Ovary (tissue), 10 donors: ENCODE measurements at regions of chr10 and their contacts with region 1.

Region 1: GRCh38 chr10:71893920-71894319 is 42.9 kb upstream of the PSAP start:
- DNase-seq: peak in 1 of 5 donors; percentile 20
- H3K4me3 ChIP-seq: no peak overlapping the region
- H3K27ac ChIP-seq: no peak overlapping the region
- H3K4me1 ChIP-seq: peaks cover 7% of the 10 kb centered on the region
- H3K27me3 ChIP-seq: no peaks in the 10 kb centered on the region
- CTCF ChIP-seq: no peak
- EP300 ChIP-seq: no peak
- POLR2A ChIP-seq: no peak

Region 2: GRCh38 chr10:70866424-70866823 is 1027.5 kb before region 1 on chr10:
- intact Hi-C with region 1: no loop called
- DNase-seq: no peak
- H3K4me3 ChIP-seq: no peak overlapping the region
- H3K27ac ChIP-seq: no peak overlapping the region
- H3K4me1 ChIP-seq: no peaks in the 10 kb centered on the region
- H3K27me3 ChIP-seq: no peaks in the 10 kb centered on the region
- CTCF ChIP-seq: no peak
- EP300 ChIP-seq: no peak
- POLR2A ChIP-seq: no peak

Region 3: DNA sequence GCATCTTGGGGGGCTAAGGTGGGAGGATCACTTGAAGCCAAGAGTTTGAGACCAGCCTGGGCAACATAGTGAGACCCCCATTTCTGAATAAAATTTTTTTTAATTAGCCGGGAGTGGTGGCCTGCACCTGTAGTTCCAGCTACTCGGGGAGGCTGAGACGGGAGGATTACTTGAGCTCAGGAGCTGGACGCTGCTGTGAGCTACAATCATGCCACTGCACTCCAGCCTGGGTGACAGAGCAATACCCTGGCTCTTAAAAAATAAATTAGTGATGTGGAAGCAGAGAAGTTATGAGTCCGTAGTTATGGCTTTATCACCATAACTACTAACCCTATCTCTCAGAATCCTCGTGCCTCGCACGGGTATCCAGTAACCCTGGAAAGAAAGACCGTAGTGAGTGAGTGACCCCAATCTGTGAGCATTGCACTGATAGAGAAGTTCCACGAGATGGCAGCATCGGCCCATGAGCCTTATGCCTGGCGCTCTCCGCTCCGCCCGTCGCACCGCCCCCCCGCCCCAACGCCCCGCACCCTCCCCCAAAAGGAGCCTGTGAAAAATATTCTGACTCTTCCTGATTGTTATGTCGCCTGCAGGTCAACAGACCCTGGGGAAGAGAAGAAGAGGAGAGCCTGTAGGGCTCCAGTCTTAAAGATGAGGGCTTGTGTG is 579.8 kb before region 1 on chr10:
- intact Hi-C with region 1: loop called in 2 of 4 experiments (anchors 5 to 10 kb)
- DNase-seq: peak; percentile 64 to 77 (median 77)
- H3K4me3 ChIP-seq: no peak overlapping the region
- H3K27ac ChIP-seq: peak overlapping the region; percentile 41 to 79
- H3K4me1 ChIP-seq: peaks cover 15% of the 10 kb centered on the region
- H3K27me3 ChIP-seq: no peaks in the 10 kb centered on the region
- CTCF ChIP-seq: peak; percentile 48 to 85 (median 70)
- EP300 ChIP-seq: no peak
- POLR2A ChIP-seq: no peak

Region 4: GRCh38 chr10:71390461-71390835 is 503.5 kb before region 1 on chr10:
- intact Hi-C with region 1: loop called in 1 of 4 experiments (anchors 5 kb)
- DNase-seq: peak in 1 of 5 donors; percentile 11
- H3K4me3 ChIP-seq: no peak overlapping the region
- H3K27ac ChIP-seq: no peak overlapping the region
- H3K4me1 ChIP-seq: no peaks in the 10 kb centered on the region
- H3K27me3 ChIP-seq: no peaks in the 10 kb centered on the region
- CTCF ChIP-seq: no peak
- EP300 ChIP-seq: no peak
- POLR2A ChIP-seq: no peak

Region 5: GRCh38 chr10:71623098-71623985 is 270.6 kb before region 1 on chr10:
- intact Hi-C with region 1: no loop called
- DNase-seq: peak in 1 of 5 donors; percentile 56
- H3K4me3 ChIP-seq: no peak overlapping the region
- H3K27ac ChIP-seq: peak overlapping the region in 1 of 2 donors; percentile 67
- H3K4me1 ChIP-seq: peaks cover 21% of the 10 kb centered on the region
- H3K27me3 ChIP-seq: no peaks in the 10 kb centered on the region
- CTCF ChIP-seq: no peak
- EP300 ChIP-seq: no peak
- POLR2A ChIP-seq: no peak

Region 6: DNA sequence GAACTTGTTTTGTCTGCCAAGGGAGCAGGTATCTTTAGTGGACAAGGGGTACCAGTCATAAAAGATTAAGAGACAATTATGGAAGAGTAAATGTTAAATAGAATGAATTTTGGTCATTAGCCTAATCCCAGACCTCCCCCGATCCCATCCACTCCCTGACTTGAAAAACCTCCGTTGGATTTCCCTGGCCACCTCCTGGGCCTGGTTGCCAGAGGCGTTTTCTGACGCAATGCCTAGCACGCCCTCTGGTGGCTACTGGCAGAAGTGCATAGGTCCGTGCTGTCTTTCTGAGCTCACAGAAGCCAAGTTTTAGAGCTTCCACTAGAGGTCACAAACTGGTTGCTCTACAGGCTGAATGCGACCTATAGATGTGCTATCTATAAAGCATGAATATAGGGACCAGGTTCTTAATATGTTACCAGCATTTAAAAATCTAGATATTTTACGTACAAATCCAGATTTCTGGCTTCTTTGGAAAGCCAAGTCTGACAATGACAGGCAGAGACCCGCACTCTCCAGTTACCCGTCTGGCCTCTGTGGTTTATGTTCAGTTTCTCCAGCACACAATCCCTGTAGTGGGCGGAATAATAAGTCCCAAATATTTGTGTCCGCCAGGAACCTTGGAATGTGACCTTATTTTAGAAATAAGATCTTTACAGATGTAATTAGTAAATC is 154.7 kb after region 1 on chr10:
- intact Hi-C with region 1: loop called in 3 of 4 experiments (anchors 2 kb)
- DNase-seq: peak; percentile 90 to 97 (median 96)
- H3K4me3 ChIP-seq: no peak overlapping the region
- H3K27ac ChIP-seq: no peak overlapping the region
- H3K4me1 ChIP-seq: peaks cover 5% of the 10 kb centered on the region
- H3K27me3 ChIP-seq: no peaks in the 10 kb centered on the region
- CTCF ChIP-seq: peak; percentile 96 to 100 (median 100)
- EP300 ChIP-seq: no peak
- POLR2A ChIP-seq: peak; percentile 33

Region 7: DNA sequence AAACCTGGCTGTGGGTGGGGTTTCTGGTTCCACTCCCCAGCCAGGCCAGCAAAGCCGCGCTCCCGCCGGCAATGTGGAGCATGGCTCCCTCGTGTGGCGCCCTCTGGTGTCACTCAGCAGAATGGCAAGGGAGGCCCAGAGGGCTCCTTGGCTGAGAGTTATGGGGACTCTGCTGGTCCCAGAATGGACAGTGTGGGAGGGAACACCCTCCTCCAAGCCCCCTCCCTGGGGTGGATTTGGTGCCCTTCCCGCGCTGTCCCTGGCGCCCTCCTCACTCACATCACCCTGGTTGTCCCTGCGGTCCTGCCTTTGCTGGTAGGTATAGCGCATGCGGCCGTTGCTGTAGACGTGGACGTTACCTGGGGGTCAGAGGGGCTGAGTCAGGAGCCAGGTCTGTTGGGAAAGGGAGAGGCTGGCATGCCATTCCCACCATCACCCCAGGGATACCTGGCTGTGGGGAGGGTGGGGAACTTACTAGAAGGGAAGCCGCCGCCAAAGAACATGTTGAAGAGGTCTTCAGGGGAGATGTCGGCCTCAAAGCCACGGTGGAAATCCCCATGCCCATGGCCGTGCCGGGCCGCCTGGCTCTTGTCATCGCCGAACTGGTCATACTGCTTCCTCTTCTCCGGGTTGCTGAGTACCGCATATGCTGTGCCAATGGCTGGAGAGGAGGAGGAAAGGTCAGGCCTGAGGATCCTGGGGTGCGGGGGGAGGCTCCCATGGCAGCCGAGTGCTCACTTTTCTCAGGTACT is 446.8 kb after region 1 on chr10:
- intact Hi-C with region 1: loop called in 3 of 4 experiments (anchors 10 kb)
- DNase-seq: peak; percentile 64 to 84 (median 75)
- H3K4me3 ChIP-seq: no peak overlapping the region
- H3K27ac ChIP-seq: peak overlapping the region in 1 of 2 donors; percentile 1
- H3K4me1 ChIP-seq: peaks cover 11% of the 10 kb centered on the region
- H3K27me3 ChIP-seq: no peaks in the 10 kb centered on the region
- CTCF ChIP-seq: peak; percentile 65 to 87 (median 80)
- EP300 ChIP-seq: no peak
- POLR2A ChIP-seq: no peak